ENCODE measurements at regions of chr10 and their contacts with region 1.

Region 1: DNA sequence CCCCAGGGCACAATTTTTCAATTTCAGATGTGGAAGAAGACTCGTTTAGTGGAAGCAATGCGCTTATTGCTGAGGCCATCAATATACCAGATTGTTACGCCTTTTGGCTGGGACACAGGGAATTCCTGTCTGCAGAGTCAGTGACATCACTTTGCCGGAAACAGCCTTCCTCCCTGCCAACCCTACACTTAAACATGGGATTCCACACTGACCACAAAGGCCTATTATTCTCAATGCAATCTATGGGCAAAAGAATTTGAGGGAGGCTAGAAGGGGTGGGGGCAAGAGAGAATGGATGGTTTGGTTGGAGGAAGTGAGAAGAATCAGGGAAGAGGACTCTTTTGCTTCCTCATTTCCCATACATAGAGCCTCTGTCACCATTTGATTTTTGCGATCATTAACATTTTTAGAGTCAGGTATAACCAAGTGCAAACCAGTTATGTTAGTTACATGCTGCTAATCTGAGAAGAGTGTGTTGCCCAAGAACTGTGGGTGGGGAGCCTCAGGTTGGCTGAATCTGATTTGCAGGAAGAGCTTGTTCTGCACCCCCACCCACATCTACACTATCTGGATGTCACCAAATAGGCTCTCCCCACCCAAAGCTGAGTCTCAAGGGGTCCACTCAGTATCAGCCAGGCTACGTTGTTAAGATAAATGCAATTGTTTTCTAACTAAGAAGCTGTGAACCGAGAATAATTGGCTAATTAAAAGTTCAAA is 58.2 kb downstream of the ENTPD1 start:
- DNase-seq: no peak

Region 2: DNA sequence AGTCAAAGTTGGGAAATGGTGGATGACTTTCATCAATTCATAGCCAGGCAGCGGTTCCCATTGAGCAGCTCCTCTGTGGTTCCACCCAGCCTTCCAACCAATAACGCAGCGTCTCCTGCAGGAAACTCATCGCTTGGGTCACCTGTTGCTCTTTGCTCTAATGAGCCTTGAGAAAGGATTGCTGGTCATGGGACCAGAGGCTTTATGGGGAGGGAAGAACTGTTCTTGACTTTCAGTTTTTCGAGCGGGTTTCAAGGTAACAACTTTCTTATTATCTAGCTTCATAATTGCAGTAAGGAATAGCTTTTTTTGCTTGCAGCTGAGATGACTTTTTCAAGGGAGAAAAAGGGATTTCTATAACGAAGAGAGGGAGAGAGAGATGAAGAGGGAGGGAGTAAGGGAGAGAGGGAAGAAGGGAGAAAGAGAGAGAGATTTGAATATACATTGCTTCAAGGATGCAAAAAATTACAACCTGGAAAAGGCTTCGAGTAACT is 58.6 kb before region 1 on chr10:
- intact Hi-C with region 1: loop called (anchors 10 kb)
- DNase-seq: peak; percentile 87

Measured in cardiac septum (tissue), 1 donor.